ENCODE measurements at regions of chr11 and their contacts with region 1.

Region 1: GRCh38 chr11:18731949-18732821 is 6.2 kb upstream of the IGSF22 start:
- DNase-seq: peak in 1 of 2 experiments; percentile 62
- H3K4me3 ChIP-seq: no peak overlapping the region
- H3K27ac ChIP-seq: no peak overlapping the region
- H3K4me1 ChIP-seq: no peaks in the 10 kb centered on the region
- H3K27me3 ChIP-seq: peaks cover 5% of the 10 kb centered on the region; the same call in 1 of the 2 replicates
- CTCF ChIP-seq: peak; percentile 100

Region 2: GRCh38 chr11:18243783-18244362 is 488.3 kb before region 1 on chr11:
- CTCF ChIA-PET with region 1: no interaction called
- POLR2A ChIA-PET with region 1: no interaction called
- intact Hi-C with region 1: loop called (anchors 10 kb)
- DNase-seq: peak; percentile 57 to 66
- H3K4me3 ChIP-seq: no peak overlapping the region
- H3K27ac ChIP-seq: no peak overlapping the region
- H3K4me1 ChIP-seq: peaks cover 6% of the 10 kb centered on the region; the same call in 1 of the 2 replicates
- H3K27me3 ChIP-seq: no peaks in the 10 kb centered on the region
- CTCF ChIP-seq: peak; percentile 97

Region 3: DNA sequence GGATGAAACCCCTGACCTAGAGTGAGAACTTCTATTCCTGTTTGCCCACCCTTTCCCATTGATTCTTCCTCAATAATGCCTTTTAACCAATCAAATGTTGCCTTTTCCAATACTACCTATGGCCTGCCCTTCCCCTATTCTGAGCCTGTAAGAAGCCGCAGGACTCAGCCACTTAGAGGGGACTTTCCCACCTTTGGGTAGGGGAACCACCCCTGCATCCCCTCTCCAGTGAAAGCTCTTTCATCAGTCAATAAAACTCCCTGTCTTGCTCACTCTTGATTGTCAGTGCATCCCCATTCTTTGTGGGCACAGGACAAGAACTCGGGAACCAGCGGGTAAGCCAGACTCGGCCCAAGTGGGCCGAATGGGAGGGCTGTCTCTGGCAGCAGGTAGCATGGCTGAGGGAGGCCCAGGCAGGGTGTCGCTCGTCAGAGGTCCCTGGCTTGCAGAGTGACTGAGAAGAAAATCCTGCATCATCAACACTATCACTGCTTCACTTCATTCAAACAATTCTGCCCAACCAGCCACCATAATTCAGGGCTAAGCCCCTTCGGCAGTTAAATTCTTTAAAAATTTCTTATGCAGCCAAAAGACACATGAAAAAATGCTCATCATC is 246.2 kb before region 1 on chr11:
- CTCF ChIA-PET with region 1: no interaction called
- POLR2A ChIA-PET with region 1: no interaction called
- intact Hi-C with region 1: no loop called
- DNase-seq: no peak
- H3K4me3 ChIP-seq: no peak overlapping the region
- H3K27ac ChIP-seq: no peak overlapping the region
- H3K4me1 ChIP-seq: peaks cover 19% of the 10 kb centered on the region
- H3K27me3 ChIP-seq: no peaks in the 10 kb centered on the region
- CTCF ChIP-seq: no peak

Region 4: DNA sequence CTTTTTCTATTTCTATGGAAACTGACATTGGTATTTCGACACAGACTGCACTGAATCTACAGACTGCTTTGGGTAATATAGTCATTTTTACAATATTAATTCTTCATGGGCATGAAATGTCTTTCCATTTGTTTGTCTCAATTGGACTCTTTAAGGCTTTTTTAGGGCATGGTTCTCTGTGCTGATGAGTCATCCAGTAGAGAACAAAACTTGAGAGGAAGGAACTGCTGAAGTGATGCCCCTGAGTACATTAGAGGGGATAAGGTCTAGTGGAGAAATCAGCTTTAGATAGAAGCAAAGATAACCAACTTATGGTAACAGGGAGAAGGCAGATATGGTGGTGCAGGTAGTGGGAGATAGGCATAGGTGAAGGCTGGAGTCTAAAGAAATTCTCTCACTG is 230.6 kb before region 1 on chr11:
- CTCF ChIA-PET with region 1: no interaction called
- POLR2A ChIA-PET with region 1: no interaction called
- intact Hi-C with region 1: no loop called
- DNase-seq: no peak
- H3K4me3 ChIP-seq: no peak overlapping the region
- H3K27ac ChIP-seq: no peak overlapping the region
- H3K4me1 ChIP-seq: no peaks in the 10 kb centered on the region
- H3K27me3 ChIP-seq: no peaks in the 10 kb centered on the region
- CTCF ChIP-seq: no peak

Region 5: GRCh38 chr11:18540207-18541009 is 191.8 kb before region 1 on chr11:
- CTCF ChIA-PET with region 1: interaction called, 3 read pairs
- POLR2A ChIA-PET with region 1: no interaction called
- intact Hi-C with region 1: loop called (anchors 2 kb)
- DNase-seq: peak in 1 of 2 experiments; percentile 51
- H3K4me3 ChIP-seq: no peak overlapping the region
- H3K27ac ChIP-seq: no peak overlapping the region
- H3K4me1 ChIP-seq: no peaks in the 10 kb centered on the region
- H3K27me3 ChIP-seq: no peaks in the 10 kb centered on the region
- CTCF ChIP-seq: peak; percentile 78

Region 6: DNA sequence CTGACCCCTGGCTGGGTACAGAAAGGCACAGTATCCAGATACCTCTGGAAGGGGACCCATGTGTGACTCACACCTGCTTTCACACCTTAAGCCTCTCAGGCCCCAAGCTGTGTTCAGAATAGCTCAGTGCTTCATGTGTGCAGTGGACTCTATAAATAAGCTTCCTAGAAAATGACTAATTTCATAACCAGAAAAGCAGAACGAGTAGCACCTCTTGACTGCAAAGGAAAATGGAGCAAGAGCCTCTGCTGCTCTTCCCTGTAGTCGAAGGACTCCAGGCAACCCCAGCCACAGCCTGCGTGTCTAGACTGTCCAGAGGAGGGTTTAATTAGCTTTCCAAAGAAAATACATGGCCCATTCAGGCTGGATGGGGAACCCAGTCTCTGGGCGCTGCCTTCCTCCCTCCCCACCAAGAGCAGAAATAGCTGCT is 36.3 kb after region 1 on chr11:
- CTCF ChIA-PET with region 1: no interaction called
- POLR2A ChIA-PET with region 1: no interaction called
- intact Hi-C with region 1: loop called (anchors 2 kb)
- DNase-seq: no peak
- H3K4me3 ChIP-seq: no peak overlapping the region
- H3K27ac ChIP-seq: no peak overlapping the region
- H3K4me1 ChIP-seq: peaks cover 7% of the 10 kb centered on the region
- H3K27me3 ChIP-seq: peaks cover 21% of the 10 kb centered on the region
- CTCF ChIP-seq: no peak

Measured in PC-9 (cell line).